Activated CD8-positive, alpha-beta T cell treated with anti-CD3 and anti-CD28 coated beads for 36 hours (primary cell): ENCODE measurements at regions of chr2 and their contacts with region 1.

Region 1: DNA sequence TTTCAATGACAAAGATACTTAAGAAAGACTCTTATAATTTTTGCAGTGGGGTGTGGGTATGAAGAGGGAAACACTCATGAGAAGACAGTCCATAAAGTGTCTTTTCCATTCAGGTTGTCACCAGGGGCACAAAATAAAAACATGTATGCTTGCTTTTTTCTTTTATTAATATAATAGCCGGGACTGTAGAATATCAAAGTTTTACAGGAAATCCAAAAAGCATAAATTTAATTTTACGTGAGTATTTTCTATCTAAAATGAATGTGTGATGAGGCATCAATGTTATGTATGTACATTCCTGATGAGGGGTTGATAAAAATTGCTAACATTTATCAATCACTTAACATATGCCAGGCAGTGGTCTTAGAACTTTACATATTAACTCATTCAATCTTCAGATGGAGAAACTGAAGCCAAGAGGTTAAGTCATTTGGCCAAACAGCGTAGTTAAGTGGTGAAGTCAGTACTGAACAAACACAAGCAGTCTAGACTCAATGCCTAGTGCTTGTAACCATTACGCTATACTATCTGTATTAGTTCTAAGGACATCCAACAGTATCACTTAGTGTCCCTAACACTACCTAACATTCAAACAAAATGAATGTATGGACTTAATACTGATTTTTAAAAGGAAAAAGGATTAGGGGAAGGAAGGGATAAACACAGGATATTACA is 10.7 kb downstream of the CCT4 start:
- DNase-seq: no peak
- ATAC-seq: no peak
- H3K4me3 Mint-ChIP-seq: no peak overlapping the region
- H3K27ac Mint-ChIP-seq: peak overlapping the region; percentile 52
- H3K4me1 Mint-ChIP-seq: peaks cover 7% of the 10 kb centered on the region
- H3K27me3 Mint-ChIP-seq: no peaks in the 10 kb centered on the region
- CTCF ChIP-seq: no peak

Region 2: DNA sequence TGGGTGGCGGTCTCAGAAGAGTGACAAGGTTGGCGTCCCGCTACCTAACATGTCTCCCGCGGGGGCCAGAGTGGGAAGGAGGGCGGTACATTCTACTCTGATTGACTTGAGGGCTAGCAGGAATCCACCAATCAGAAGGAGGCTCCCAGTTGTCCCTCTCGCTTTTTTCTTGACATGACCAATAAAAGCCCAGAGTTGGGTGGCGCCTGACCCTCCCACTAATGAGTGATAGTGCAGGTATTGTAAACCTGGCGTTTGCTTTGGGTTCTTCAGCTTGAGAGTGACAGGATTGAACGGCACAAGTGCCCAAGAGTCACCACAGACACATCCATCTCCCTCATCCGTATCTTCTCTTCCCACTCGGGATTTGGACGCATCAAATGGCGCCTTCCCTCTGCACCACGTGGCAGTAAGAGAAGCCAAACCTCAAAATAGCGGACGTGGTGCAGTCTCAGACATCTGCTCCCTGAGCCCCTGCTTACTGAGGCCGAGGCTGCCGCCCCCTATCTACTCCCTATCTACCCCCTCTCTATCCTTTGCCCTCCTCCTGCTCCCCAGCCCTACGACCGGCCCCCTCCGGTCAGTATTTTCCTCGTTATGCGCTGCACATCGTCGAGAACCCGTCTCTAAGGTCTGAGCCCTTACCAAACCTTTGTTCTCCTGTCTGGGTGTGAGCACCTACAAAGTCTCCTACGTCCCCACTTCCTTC is 23.1 kb before region 1 on chr2:
- CTCF ChIA-PET with region 1: no interaction called
- POLR2A ChIA-PET with region 1: interaction called, 11 read pairs
- intact Hi-C with region 1: no loop called
- DNase-seq: peak; percentile 95
- ATAC-seq: peak; percentile 92
- H3K4me3 Mint-ChIP-seq: peak overlapping the region; percentile 97
- H3K27ac Mint-ChIP-seq: peak overlapping the region; percentile 93
- H3K4me1 Mint-ChIP-seq: peaks cover 20% of the 10 kb centered on the region
- H3K27me3 Mint-ChIP-seq: no peaks in the 10 kb centered on the region
- CTCF ChIP-seq: no peak

Region 3: GRCh38 chr2:61888267-61889055 is 10.8 kb after region 1 on chr2 and contains the start of gene CCT4:
- CTCF ChIA-PET with region 1: no interaction called
- POLR2A ChIA-PET with region 1: interaction called, 13 read pairs
- intact Hi-C with region 1: no loop called
- DNase-seq: peak; percentile 90
- ATAC-seq: peak; percentile 88
- H3K4me3 Mint-ChIP-seq: peak within 1 kb of the TSS; percentile 99
- H3K27ac Mint-ChIP-seq: peak within 1 kb of the TSS; percentile 99
- H3K4me1 Mint-ChIP-seq: peaks cover 31% of the 10 kb centered on the region
- H3K27me3 Mint-ChIP-seq: no peaks in the 10 kb centered on the region
- CTCF ChIP-seq: no peak
- total RNA-seq, gene CCT4: 388 to 390 TPM